Dorsolateral prefrontal cortex (tissue), 120 donors: ENCODE measurements at regions of chr1 and their contacts with region 1.

Region 1: DNA sequence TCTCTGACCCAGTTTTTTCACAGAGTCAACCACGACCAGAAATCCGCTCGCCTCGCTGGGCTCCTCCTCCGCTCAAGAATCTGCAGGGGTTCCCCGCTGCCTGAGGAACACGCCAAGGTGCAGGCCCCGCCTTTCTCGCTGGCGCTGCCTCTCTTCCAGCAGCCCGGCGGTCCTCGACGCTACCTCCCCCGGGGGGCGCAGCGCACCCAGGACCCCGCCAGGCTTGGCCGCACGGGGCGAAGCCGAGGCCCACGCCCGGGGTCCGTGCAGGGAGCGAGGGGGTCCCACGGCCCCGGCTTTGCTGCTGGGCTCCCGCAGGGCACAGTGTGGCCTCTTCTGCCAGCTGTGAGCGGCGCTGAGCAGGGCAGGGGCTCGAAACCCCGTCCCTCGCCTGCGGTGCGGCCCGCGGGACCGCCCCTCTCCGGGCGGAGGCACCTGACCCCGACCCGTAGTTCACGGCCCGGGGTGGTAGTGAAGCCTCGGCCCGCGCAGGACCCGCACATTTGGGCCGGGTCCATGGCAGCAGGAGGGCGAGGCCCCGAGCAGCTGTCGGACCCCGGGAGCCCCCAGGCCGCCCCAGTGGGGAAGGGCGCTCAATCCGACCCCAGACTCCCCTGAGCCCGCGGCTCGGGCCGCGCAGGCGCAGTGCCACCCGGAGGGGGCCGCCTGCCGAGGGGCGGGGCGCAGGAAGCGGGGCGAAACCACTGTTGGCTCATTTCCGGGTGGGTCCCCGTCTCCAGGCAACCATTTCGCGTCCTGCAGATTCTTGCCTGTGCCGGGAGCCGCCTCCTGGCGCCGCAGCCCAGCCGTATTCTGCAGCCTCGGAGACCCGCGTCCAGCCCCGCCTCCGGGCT is 10.0 kb upstream of the MMEL1 start:
- DNase-seq: peak; percentile 74 to 92 (median 88)
- H3K4me3 ChIP-seq: peak overlapping the region; percentile 58 to 100 (median 92)
- H3K27ac ChIP-seq: peak overlapping the region in 53 of 59 donors; percentile 15 to 96 (median 81)
- H3K27me3 ChIP-seq: no peaks in the 10 kb centered on the region
- CTCF ChIP-seq: peak in 30 of 56 donors; percentile 6 to 47 (median 22)

Region 2: DNA sequence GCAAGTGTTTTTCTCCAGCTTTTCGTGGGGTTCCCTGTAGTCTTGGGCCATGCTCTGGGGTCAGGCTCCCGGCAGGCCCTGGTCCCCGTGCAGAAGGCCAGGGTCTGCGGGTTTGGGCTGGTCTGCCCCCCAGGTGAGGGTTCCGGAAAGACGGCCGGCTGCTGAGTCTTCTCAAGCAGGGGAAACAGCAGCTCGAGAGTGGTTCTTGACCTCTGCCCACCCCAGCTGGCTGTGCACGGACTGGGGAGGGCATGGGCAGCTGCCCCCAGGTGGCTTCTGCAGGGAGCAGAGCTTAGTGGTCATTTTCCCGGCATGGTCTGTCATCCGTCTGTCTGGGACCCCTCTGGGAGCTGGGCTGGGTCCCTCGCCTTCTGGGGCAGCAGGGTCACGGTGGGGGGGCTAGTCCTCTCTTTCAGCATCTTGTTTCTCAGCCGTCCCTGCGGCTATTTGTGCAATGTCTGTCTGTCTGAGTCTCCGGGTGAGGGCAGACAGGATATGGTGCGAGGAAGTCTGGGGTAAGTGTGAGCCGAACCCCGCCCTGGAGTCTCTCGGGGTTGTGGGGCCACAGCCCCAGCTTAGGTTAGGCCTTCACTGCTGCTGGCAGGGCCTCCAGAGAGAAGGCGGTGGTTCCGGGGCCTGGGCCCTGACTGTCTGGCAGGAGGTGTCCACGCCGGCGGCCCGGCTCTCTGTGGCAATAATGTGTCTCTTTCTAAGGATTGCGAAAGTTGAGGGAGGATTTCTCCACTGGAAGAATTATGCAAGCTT is 408.6 kb before region 1 on chr1:
- intact Hi-C with region 1: no loop called
- DNase-seq: peak in 6 of 10 donors; percentile 50 to 81 (median 66)
- H3K4me3 ChIP-seq: peak overlapping the region; percentile 2 to 86 (median 72)
- H3K27ac ChIP-seq: peak overlapping the region in 57 of 59 donors; percentile 2 to 96 (median 84)
- H3K27me3 ChIP-seq: no peaks in the 10 kb centered on the region
- CTCF ChIP-seq: no peak

Region 3: GRCh38 chr1:2586154-2587070 is 56.4 kb before region 1 on chr1 and contains the start of gene PRXL2B:
- intact Hi-C with region 1: loop called (anchors 5 kb)
- DNase-seq: peak; percentile 97 to 99 (median 99)
- H3K4me3 ChIP-seq: peak within 1 kb of the TSS; percentile 67 to 95 (median 85)
- H3K27ac ChIP-seq: peak within 1 kb of the TSS; percentile 55 to 99 (median 94)
- H3K27me3 ChIP-seq: no peaks in the 10 kb centered on the region
- CTCF ChIP-seq: peak in 8 of 56 donors; percentile 5 to 26 (median 12)
- total RNA-seq, gene PRXL2B: 24.0 to 76.4 (median 50.5) TPM

Region 4: GRCh38 chr1:2594001-2594640 is 48.7 kb before region 1 on chr1:
- intact Hi-C with region 1: loop called (anchors 5 kb)
- DNase-seq: peak in 6 of 10 donors; percentile 22 to 44 (median 32)
- H3K4me3 ChIP-seq: no peak overlapping the region
- H3K27ac ChIP-seq: no peak overlapping the region
- H3K27me3 ChIP-seq: peaks cover 0 to 17% (median 0%) of the 10 kb centered on the region in 45 donors
- CTCF ChIP-seq: no peak